ENCODE measurements at regions of chr14 and their contacts with region 1.

Region 1: GRCh38 chr14:92144708-92145107 is 22.9 kb downstream of the CPSF2 start:
- DNase-seq: no peak
- ATAC-seq: no peak
- H3K4me3 ChIP-seq: no peak overlapping the region
- H3K27ac ChIP-seq: no peak overlapping the region
- H3K4me1 ChIP-seq: no peaks in the 10 kb centered on the region
- H3K27me3 ChIP-seq: no peaks in the 10 kb centered on the region
- CTCF ChIP-seq: no peak

Region 2: GRCh38 chr14:92603309-92604242 is 458.9 kb after region 1 on chr14:
- intact Hi-C with region 1: loop called in 1 of 10 experiments (anchors 10 kb)
- DNase-seq: peak; percentile 37 to 52
- ATAC-seq: peak; percentile 85 to 94 (median 88)
- H3K4me3 ChIP-seq: no peak overlapping the region
- H3K27ac ChIP-seq: peak overlapping the region in 3 of 10 donors; percentile 42 to 77 (median 64)
- H3K4me1 ChIP-seq: peaks cover 0 to 46% (median 24%) of the 10 kb centered on the region in 9 donors
- H3K27me3 ChIP-seq: no peaks in the 10 kb centered on the region
- CTCF ChIP-seq: peak in 7 of 9 donors; percentile 28 to 66 (median 58)

Region 3: GRCh38 chr14:92686900-92687444 is 542.3 kb after region 1 on chr14:
- intact Hi-C with region 1: loop called in 5 of 10 experiments (anchors 5 to 10 kb)
- DNase-seq: peak; percentile 66 to 81
- ATAC-seq: peak; percentile 79 to 90 (median 86)
- H3K4me3 ChIP-seq: peak overlapping the region in 9 of 10 donors; percentile 32 to 56 (median 47)
- H3K27ac ChIP-seq: no peak overlapping the region
- H3K4me1 ChIP-seq: peaks cover under 1 to 19% (median 7%) of the 10 kb centered on the region in 9 donors
- H3K27me3 ChIP-seq: no peaks in the 10 kb centered on the region
- CTCF ChIP-seq: peak; percentile 68 to 100 (median 98)

Measured in heart right ventricle (tissue), 16 donors.